ENCODE measurements at regions of chr15 and their contacts with region 1.

Region 1: GRCh38 chr15:75307778-75308391 is 25.2 kb downstream of the GOLGA6D start:
- DNase-seq: peak; percentile 77
- H3K4me3 ChIP-seq: no peak overlapping the region
- H3K27ac ChIP-seq: no peak overlapping the region
- H3K4me1 ChIP-seq: no peaks in the 10 kb centered on the region
- H3K27me3 ChIP-seq: peaks cover 27% of the 10 kb centered on the region
- CTCF ChIP-seq: peak; percentile 35 to 66 (median 50)
- EP300 ChIP-seq: no peak
- POLR2A ChIP-seq: no peak

Region 2: DNA sequence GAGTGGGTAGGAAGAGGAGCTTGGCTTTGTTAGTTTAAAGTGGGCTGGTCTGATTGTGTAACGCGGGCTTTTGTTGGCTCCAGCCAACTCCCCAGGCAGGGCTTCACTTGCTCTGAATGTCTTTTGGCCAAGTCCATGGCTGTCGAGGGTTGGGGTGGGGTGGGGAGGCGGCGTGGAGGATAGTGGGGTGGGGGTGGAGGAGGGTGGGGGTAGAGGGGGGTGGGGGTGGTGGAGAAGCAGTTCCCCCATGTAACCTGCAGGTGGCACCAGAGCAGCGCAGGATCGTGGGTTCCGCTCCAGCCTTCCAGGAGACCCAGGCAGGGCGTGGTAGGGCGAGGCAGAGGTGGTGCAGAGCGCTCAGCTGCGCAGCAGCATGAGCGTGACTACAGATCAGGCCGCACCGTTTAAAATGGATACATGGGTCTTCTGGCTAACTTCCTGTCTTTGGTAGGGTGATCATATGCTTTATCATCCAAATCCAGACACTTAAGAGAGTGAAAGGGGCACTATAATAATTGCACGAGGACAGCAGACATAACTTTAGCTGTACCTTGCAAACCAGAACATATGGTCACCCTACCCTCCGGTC is 1253.8 kb before region 1 on chr15:
- in situ Hi-C with region 1: loop called in 1 of 4 experiments (anchors 25 kb)
- intact Hi-C with region 1: no loop called
- DNase-seq: peak; percentile 80
- H3K4me3 ChIP-seq: no peak overlapping the region
- H3K27ac ChIP-seq: peak overlapping the region in 2 of 4 donors; percentile 41 to 57
- H3K4me1 ChIP-seq: peaks cover 10 to 38% (median 23%) of the 10 kb centered on the region in 4 donors
- H3K27me3 ChIP-seq: no peaks in the 10 kb centered on the region
- CTCF ChIP-seq: peak; percentile 18 to 78 (median 61)
- EP300 ChIP-seq: no peak
- POLR2A ChIP-seq: no peak

Measured in transverse colon (tissue), 4 donors.